Mammary epithelial cell (primary cell): ENCODE measurements at regions of chr11 and their contacts with region 1.

Region 1: GRCh38 chr11:64846998-64847666 is 2.7 kb upstream of the CDC42BPG start:
- DNase-seq: peak; percentile 79
- H3K4me3 ChIP-seq: no peak overlapping the region
- H3K27ac ChIP-seq: no peak overlapping the region
- H3K4me1 ChIP-seq: peaks cover 50% of the 10 kb centered on the region
- H3K27me3 ChIP-seq: no peaks in the 10 kb centered on the region
- CTCF ChIP-seq: peak; percentile 73 to 95

Region 2: DNA sequence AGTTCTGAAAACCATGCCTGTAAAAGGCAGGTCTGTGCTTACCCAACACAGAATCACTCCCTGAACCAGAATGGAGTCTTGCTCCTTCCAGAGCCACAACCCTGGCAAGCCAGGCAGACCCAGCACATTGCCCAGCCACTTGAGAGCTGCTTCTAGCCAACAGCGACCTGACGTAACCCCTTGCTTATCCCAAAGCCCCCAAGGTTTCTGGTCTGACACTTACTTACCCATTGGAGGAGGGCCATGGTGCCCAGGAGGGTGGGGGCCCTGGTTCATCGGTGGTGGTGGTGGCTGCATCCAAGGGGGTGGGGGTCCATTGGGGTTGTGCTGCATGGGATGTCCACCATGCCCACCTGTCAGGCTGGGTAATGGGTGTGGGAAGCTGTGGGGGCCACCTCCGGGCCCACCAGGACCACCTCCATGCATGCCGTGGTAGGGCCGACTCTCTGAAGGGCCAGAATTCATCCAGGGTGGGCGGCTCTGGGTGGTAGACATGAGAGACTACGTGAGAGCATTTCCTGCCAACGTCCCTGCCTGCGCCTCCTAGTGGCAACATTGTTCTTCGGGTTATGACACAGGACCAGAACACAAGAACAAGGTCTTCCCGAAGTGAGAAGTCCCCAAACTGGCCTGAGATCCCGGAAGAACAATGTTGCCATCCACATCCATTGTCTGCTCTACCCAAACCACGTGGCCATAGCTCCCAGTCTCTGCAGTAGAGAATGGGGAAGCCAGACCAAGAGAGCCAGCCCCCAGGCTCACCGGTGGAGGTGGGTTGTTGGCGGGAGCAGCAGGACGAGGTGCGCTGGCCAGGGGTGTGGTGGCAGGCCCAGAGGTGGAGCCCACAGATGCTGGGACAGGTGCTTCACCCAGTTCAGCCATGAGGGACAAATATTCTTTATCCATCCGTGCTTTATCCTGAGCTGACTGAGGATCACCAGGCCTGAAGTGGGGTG is 79.5 kb before region 1 on chr11:
- CTCF ChIA-PET with region 1: no interaction called
- dilution Hi-C with region 1: no loop called
- in situ Hi-C with region 1: no loop called
- intact Hi-C with region 1: no loop called
- DNase-seq: no peak
- H3K4me3 ChIP-seq: no peak overlapping the region
- H3K27ac ChIP-seq: no peak overlapping the region
- H3K4me1 ChIP-seq: peaks cover 14% of the 10 kb centered on the region
- H3K27me3 ChIP-seq: no peaks in the 10 kb centered on the region
- CTCF ChIP-seq: peak; percentile 72 to 79

Region 3: DNA sequence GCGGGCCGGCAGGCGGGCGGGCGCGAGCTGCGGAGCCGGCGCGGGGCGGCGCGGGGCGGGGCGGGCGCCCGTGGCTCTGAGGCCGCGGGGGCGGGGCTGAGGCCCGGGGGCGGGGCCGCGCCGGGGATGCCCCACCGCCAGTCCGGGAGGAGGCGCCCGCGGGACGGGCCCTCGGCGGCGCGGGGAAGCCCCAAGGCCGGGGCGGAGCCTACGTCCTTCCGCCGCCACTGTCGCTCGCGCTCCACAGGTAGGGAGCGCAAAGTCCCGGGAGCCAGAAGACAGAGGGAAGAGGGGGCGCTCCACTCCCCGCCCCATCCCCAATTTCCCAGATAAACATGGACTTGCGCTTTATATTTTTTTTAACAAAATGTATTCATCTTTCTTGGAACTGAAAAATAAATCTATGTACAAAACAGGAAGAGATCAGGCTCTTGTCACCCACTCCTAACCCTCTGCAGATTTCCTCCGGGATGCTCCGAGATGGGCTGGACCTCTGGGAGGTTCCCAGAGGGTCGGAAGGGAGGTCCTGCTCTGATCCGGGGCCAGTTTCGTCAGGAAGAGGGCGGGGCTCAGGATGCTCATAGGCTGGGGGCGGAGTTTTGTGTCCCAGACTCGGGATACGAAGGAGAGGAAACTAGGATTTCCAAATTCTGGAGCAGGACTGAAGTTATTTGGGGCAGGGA is 43.8 kb before region 1 on chr11 and contains the start of gene MAP4K2:
- CTCF ChIA-PET with region 1: no interaction called
- dilution Hi-C with region 1: no loop called
- in situ Hi-C with region 1: no loop called
- intact Hi-C with region 1: loop called (anchors 1 kb)
- DNase-seq: peak; percentile 77
- H3K4me3 ChIP-seq: peak within 1 kb of the TSS; percentile 56 to 78 (median 69)
- H3K27ac ChIP-seq: peak within 1 kb of the TSS; percentile 82
- H3K4me1 ChIP-seq: peaks cover 14% of the 10 kb centered on the region
- H3K27me3 ChIP-seq: no peaks in the 10 kb centered on the region
- CTCF ChIP-seq: peak in 1 of 2 donors; percentile 33
- total RNA-seq, gene MAP4K2: 15.4 to 15.5 TPM

Region 4: GRCh38 chr11:64878494-64879243 is 31.5 kb after region 1 on chr11 and contains the start of gene EHD1:
- CTCF ChIA-PET with region 1: interaction called, 3 read pairs
- dilution Hi-C with region 1: no loop called
- in situ Hi-C with region 1: no loop called
- intact Hi-C with region 1: loop called (anchors 1 kb)
- DNase-seq: peak; percentile 96
- H3K4me3 ChIP-seq: peak within 1 kb of the TSS; percentile 64 to 99 (median 99)
- H3K27ac ChIP-seq: peak within 1 kb of the TSS; percentile 46
- H3K4me1 ChIP-seq: peaks cover 27% of the 10 kb centered on the region
- H3K27me3 ChIP-seq: no peaks in the 10 kb centered on the region
- CTCF ChIP-seq: peak; percentile 18 to 73
- total RNA-seq, gene EHD1: 71.2 to 172 TPM

Region 5: GRCh38 chr11:64916775-64917662 is 69.9 kb after region 1 on chr11 and contains the start of gene ATG2A:
- CTCF ChIA-PET with region 1: no interaction called
- dilution Hi-C with region 1: no loop called
- in situ Hi-C with region 1: no loop called
- intact Hi-C with region 1: loop called (anchors 1 kb)
- DNase-seq: peak; percentile 100
- H3K4me3 ChIP-seq: peak within 1 kb of the TSS; percentile 66 to 87 (median 71)
- H3K27ac ChIP-seq: peak within 1 kb of the TSS; percentile 70
- H3K4me1 ChIP-seq: peaks cover 9% of the 10 kb centered on the region
- H3K27me3 ChIP-seq: no peaks in the 10 kb centered on the region
- CTCF ChIP-seq: no peak
- total RNA-seq, gene ATG2A: 20.7 to 21.0 TPM

Region 6: GRCh38 chr11:65013692-65014145 is 166.6 kb after region 1 on chr11:
- CTCF ChIA-PET with region 1: no interaction called
- dilution Hi-C with region 1: loop called (anchors 5 kb)
- in situ Hi-C with region 1: no loop called
- intact Hi-C with region 1: loop called (anchors 1 kb)
- DNase-seq: peak; percentile 74
- H3K4me3 ChIP-seq: peak overlapping the region; percentile 64 to 85 (median 72)
- H3K27ac ChIP-seq: peak overlapping the region; percentile 90
- H3K4me1 ChIP-seq: peaks cover 11% of the 10 kb centered on the region
- H3K27me3 ChIP-seq: no peaks in the 10 kb centered on the region
- CTCF ChIP-seq: no peak

Region 7: GRCh38 chr11:65095974-65096806 is 249.1 kb after region 1 on chr11 and contains the start of gene VPS51:
- CTCF ChIA-PET with region 1: no interaction called
- dilution Hi-C with region 1: no loop called
- in situ Hi-C with region 1: no loop called
- intact Hi-C with region 1: loop called (anchors 5 kb)
- DNase-seq: peak; percentile 83
- H3K4me3 ChIP-seq: peak within 1 kb of the TSS; percentile 57 to 70 (median 61)
- H3K27ac ChIP-seq: peak within 1 kb of the TSS; percentile 50
- H3K4me1 ChIP-seq: peaks cover 9% of the 10 kb centered on the region
- H3K27me3 ChIP-seq: no peaks in the 10 kb centered on the region
- CTCF ChIP-seq: no peak
- total RNA-seq, gene VPS51: 78.4 to 125 TPM

Region 8: GRCh38 chr11:65314501-65315203 is 467.5 kb after region 1 on chr11 and contains the start of gene CDC42EP2:
- CTCF ChIA-PET with region 1: interaction called, 5 read pairs
- dilution Hi-C with region 1: no loop called
- in situ Hi-C with region 1: no loop called
- intact Hi-C with region 1: loop called (anchors 10 kb)
- DNase-seq: peak; percentile 82
- H3K4me3 ChIP-seq: peak within 1 kb of the TSS; percentile 77 to 91 (median 88)
- H3K27ac ChIP-seq: peak within 1 kb of the TSS; percentile 46
- H3K4me1 ChIP-seq: peaks cover 13% of the 10 kb centered on the region
- H3K27me3 ChIP-seq: no peaks in the 10 kb centered on the region
- CTCF ChIP-seq: no peak
- total RNA-seq, gene CDC42EP2: 6.8 to 24.8 TPM